ENCODE measurements at regions of chr11 and their contacts with region 1.

Region 1: DNA sequence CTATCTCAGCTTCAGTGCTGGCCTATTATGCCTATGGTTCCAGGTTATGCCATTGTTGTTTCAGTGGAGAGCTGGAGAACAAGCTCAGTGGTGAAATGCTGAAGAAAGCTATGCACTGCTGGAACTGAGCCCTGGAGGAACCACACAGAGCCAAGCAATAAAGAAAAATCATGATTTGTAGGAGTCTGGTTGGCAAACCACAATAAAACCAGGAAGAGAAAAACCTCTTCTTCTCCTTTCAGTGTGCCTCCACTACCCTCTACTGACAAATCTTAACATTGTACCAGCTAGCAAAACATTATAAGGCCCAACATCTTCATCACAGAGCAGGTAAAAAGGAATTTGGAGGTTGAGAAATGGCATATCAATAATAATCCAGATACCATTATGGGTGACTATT is 5.3 kb downstream of the OR51F2 start:
- DNase-seq: no peak

Region 2: GRCh38 chr11:4848908-4849532 is 22.6 kb after region 1 on chr11 and contains the start of gene OR51S1:
- intact Hi-C with region 1: loop called in 1 of 2 experiments (anchors 2 kb)
- DNase-seq: no peak
- total RNA-seq, gene OR51S1: not detected